ENCODE measurements at regions of chr9 and their contacts with region 1.

Region 1: DNA sequence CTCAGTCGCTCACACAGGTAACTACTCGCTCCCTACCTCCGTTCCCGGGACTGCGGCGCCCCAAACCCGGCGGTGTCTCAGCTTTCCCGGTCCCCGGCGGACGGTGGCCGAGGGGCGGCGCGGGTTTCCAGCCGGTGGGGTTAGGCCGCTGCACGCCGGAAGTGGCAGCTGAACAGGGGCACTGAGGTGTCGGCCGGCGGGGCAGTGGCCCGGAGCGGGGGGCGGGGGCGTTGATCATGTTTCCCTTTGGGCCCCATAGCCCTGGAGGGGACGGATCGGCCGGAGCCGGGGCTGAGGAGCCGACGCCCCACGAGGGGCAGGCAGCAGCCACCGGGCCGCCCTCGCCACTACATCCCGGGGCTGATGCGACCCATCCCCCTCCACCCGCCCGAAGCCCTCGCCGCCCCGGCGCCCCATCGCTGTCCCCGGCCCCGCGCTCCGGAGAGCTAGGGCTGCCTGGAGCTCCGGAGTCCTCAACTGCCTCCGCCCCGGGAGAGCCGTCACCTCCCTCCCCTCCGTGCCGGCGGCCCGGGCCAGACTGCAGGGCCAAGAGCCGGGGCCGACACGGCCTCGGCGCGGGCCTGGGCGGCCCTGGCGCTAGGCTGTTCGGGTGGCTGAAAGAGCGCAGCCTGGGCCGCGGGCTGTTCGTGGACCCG is at the start of gene DCAF10:
- DNase-seq: peak; percentile 86
- H3K4me3 ChIP-seq: peak within 1 kb of the TSS; percentile 23 to 64 (median 63)
- H3K27ac ChIP-seq: peak within 1 kb of the TSS; percentile 9
- H3K4me1 ChIP-seq: peaks cover 14% of the 10 kb centered on the region
- H3K27me3 ChIP-seq: no peaks in the 10 kb centered on the region
- CTCF ChIP-seq: no peak
- POLR2A ChIP-seq: peak; percentile 81
- total RNA-seq, gene DCAF10: 20.0 and 21.5 TPM in 2 replicates

Region 2: DNA sequence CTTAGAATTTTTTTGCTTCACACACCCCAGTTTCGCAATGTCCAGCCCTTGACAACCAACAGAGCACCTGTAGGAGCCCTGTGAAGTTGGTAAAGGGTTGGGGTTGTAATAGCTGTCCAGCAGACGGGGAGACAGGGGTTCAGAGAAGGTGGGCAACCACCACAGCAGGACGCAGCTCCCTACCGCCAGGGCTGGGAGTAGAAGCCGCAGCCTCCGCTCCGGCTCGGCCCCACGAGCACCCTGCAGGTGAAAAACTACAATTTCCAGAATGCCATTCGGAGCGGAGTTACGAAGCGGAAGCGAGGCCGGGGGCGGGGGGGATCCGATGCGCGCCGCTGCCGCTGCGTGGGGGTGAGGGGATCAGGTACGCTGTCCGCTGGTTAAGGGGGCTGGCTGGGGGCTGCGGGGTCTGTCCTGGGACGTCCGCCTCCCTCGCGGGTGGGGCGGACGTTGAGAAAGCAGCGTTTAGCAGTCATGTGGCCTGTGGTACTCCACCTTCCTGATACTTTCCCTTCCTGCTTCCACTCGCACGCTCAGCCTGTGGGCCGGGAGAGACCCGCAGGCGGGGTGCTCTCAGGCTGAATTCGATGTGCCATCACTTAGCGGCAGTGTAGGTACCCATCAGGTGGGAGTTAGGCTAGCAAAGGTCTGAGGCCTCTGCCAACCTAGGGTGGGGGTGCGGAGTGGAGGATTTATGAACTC is 47.1 kb before region 1 on chr9 and contains the start of gene TRMT10B:
- CTCF ChIA-PET with region 1: interaction called, 3 read pairs
- POLR2A ChIA-PET with region 1: no interaction called
- dilution Hi-C with region 1: no loop called
- intact Hi-C with region 1: loop called (anchors 2 kb)
- DNase-seq: peak; percentile 82
- H3K4me3 ChIP-seq: peak within 1 kb of the TSS; percentile 66 to 96 (median 92)
- H3K27ac ChIP-seq: peak within 1 kb of the TSS; percentile 69
- H3K4me1 ChIP-seq: peaks cover 10% of the 10 kb centered on the region
- H3K27me3 ChIP-seq: peaks cover 0 to 6% of the 10 kb centered on the region in 2 experiments
- CTCF ChIP-seq: peak in 1 of 2 donors; percentile 6
- POLR2A ChIP-seq: peak; percentile 65
- total RNA-seq, gene TRMT10B: 5.2 and 7.0 TPM in 2 replicates

Region 3: DNA sequence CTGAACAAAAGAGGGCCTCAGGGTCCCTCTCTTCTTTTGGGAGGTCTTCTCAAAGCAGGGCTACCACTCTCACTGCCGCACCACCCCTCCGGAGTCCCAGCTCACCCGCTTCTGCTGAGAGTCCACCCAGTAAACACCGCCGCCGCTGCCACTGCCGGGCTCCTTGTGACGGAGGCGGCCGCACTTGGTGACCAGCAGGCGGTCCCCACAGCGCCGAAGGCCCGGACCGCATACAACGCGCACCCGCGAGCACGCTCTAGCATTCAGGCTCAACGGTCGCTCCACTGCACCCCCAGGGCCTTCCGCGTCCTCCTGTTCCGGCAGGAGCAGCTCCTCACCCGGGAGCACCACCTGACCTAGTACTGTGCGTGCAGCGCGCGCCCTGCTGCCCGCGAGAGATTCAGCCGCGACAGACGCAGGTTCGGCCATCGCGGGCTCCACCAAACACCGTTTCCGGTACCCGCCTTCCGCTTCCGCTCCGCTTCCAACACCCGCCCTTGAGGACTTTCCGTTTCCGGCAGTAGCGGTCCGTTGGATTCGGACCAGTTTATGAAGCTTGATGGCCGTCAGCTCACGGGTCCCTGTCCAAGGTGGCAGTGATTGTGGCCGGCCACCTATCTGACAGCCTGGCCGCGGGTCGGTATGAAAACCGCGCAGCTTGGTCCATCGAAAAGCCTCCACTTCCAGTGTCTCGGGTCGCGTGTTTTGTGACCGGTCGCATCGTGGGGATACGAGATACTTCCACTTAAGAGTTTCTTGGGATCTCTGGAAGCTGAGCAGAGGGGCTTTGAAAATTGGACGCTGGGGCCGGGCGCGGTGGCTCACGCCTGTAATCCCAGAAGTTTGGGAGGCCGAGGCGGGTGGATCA is 15.9 kb before region 1 on chr9 and contains the start of gene EXOSC3:
- CTCF ChIA-PET with region 1: interaction called, 3 read pairs
- POLR2A ChIA-PET with region 1: interaction called, 7 read pairs
- dilution Hi-C with region 1: no loop called
- intact Hi-C with region 1: loop called (anchors 1 kb)
- DNase-seq: peak; percentile 91
- H3K4me3 ChIP-seq: peak within 1 kb of the TSS; percentile 42 to 80 (median 64)
- H3K27ac ChIP-seq: peak within 1 kb of the TSS; percentile 34
- H3K4me1 ChIP-seq: peaks cover 12% of the 10 kb centered on the region
- H3K27me3 ChIP-seq: no peaks in the 10 kb centered on the region
- CTCF ChIP-seq: no peak
- POLR2A ChIP-seq: peak; percentile 94
- total RNA-seq, gene EXOSC3: 38.0 and 39.1 TPM in 2 replicates

Region 4: DNA sequence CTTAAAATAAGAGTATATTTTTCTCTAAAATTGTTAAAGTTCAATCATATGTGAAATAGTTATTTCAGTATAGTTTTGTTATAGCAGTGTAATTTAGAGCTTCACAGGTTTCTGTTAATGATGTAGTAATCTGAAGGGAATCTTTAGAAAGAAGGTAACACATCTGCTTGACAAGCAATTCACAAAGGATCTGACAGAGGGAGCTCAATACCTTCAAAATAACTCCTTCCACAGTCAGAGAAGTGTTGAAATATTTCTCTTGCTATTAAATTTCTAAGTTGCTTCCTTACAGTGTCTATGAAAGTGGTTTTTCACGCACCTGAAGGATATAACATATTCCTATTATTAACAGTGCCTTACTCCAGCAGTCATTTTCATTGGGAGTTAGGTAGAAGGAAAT is 58.3 kb after region 1 on chr9:
- CTCF ChIA-PET with region 1: no interaction called
- POLR2A ChIA-PET with region 1: no interaction called
- dilution Hi-C with region 1: no loop called
- intact Hi-C with region 1: no loop called
- DNase-seq: peak; percentile 9
- H3K4me3 ChIP-seq: no peak overlapping the region
- H3K27ac ChIP-seq: no peak overlapping the region
- H3K4me1 ChIP-seq: no peaks in the 10 kb centered on the region
- H3K27me3 ChIP-seq: no peaks in the 10 kb centered on the region
- CTCF ChIP-seq: no peak
- POLR2A ChIP-seq: no peak

Region 5: DNA sequence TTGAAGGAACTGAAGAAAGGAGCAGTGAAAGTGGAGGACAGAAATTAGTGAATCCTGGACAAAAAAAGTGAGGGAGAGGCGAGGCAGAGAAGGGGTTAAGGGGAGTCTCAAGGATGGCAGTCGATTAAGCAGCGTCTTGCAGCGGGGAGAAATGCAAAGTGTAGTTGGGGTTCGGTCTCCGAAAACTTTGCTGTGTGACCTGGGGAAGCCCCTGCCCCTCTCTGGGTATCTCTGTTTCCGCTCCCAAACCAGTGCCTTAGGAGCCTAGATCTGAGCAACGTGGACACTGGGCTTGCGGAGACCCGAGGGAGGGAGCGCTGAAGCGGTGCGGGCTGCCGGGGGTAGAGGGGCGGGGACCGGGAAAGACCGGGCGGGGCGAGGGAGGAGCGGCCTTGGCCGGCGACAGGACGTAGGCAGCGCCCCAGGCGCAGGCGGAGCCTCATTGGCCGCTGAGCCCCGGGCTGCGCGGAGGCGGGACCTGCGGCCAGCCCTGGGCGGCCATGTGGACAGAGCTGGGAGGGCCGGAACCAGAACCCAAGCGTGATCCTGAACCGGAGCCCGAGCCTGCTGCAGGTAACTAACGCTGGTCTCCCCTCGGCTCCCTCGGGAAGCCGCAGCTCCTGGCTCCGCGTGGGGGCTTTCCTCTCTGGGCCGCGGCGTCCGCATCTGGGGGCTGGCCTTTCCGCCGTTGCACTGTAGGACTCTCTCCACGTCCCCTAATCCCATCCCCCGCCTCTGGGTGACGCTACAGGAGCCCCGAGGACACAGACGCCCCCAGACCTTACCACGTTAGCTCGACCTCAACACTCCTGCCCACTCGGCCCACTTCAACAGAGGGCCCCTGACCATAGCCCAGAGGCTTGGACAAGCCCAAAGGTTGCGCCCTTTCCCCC is 591.7 kb after region 1 on chr9 and contains the start of gene ALDH1B1:
- CTCF ChIA-PET with region 1: no interaction called
- POLR2A ChIA-PET with region 1: no interaction called
- dilution Hi-C with region 1: no loop called
- intact Hi-C with region 1: loop called (anchors 5 kb)
- DNase-seq: peak; percentile 89
- H3K4me3 ChIP-seq: peak within 1 kb of the TSS; percentile 42 to 89 (median 82)
- H3K27ac ChIP-seq: peak within 1 kb of the TSS; percentile 43
- H3K4me1 ChIP-seq: peaks cover 7% of the 10 kb centered on the region
- H3K27me3 ChIP-seq: no peaks in the 10 kb centered on the region
- CTCF ChIP-seq: peak in 1 of 2 donors; percentile 31
- POLR2A ChIP-seq: peak; percentile 79
- total RNA-seq, gene ALDH1B1: 20.5 and 21.7 TPM in 2 replicates